Esophagus muscularis mucosa (tissue), 4 donors: ENCODE measurements at regions of chr3 and their contacts with region 1.

Region 1: DNA sequence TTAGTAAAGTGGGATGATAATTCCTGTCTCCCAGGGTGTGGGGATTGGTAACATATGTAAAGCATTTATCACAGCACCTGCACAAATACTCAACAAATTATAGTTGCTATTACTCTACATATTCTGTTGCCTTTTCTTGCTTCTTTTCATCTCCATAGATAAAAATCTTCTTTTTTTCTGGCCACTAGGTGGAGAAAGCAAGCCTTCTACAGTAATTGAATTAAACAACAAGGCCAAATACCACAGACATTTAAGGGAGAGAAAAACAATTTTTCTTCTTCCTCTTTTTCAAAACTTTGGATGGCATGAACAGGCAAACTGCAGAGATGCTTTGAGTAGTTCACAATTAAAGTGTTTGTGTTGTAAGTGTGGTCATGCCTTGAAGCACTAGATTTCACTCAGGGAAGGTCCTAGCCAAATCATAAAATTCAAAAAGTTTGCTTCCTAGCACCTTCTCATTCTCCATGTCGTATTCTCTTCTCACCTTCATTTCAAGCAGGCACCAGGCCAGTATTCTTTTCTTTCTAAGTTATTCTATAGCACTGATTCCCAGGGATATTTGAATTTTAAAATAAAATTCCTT is 493.4 kb upstream of the TGFBR2 start:
- DNase-seq: no peak
- H3K4me3 ChIP-seq: no peak overlapping the region
- H3K27ac ChIP-seq: peak overlapping the region in 1 of 4 donors; percentile 15
- H3K4me1 ChIP-seq: peaks cover 10 to 24% (median 20%) of the 10 kb centered on the region in 4 donors
- H3K27me3 ChIP-seq: no peaks in the 10 kb centered on the region
- CTCF ChIP-seq: peak; percentile 68 to 70 (median 69)
- EP300 ChIP-seq: no peak
- POLR2A ChIP-seq: no peak

Region 2: DNA sequence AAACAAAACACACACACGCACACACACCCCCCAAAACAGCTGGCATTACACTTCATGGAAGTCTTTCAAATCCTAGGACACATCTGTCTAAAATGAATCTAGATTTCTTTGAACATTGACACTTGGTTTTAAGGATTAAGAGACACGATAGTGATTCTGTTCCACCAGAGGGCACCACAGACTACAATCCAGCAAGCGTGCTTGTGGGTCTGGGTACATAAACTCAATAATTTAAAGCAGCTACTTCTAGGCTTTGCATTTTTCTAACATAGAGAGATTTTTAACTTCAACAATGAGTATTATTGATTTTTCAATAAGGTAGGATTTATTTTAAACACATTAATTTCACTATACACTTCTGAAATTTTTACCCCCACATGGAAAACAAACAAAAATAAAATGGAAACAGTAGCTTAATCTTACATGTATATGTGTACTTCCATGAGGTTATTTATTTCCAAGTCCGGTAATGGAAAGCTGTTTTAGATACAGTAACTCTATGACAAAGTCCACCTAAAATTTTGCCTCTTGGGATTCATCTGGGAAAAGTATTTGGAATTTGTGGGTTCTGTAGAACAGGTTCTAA is 70.6 kb before region 1 on chr3:
- intact Hi-C with region 1: loop called (anchors 5 kb)
- DNase-seq: no peak
- H3K4me3 ChIP-seq: no peak overlapping the region
- H3K27ac ChIP-seq: no peak overlapping the region
- H3K4me1 ChIP-seq: peaks cover 0 to 5% (median 0%) of the 10 kb centered on the region in 4 donors
- H3K27me3 ChIP-seq: no peaks in the 10 kb centered on the region
- CTCF ChIP-seq: peak; percentile 68 to 77 (median 75)
- EP300 ChIP-seq: no peak
- POLR2A ChIP-seq: no peak

Region 3: DNA sequence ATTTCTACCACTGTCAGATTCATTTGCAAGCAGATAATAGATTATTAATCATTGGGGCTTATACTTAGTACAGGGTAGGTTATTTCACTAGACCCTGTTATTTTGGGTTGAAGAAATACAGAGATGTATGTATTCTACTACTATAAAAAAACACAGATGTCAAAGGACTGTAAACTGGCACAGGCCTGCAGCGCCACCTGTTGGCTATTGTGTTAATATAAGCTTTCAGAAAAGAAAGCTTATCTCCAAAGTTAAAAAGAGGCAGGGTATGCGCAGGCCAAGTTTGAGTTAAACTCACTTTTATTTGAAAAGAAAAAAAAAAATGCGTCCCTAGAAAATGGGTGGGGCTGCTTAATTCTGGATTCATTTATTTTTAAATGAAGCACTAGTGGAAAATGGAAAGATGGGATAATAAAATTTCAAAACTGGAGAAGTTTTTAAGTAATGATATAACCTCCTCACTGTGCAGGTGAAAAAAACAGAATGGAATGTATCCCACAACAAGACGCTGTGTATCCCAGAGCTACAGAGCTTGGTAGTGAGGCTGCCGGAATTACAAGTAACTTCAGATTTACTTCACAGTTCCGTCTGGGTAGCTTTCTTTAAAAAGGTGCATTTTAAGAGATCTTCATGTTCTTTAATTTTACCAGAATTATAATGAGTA is 86.2 kb after region 1 on chr3:
- intact Hi-C with region 1: loop called (anchors 2 kb)
- DNase-seq: no peak
- H3K4me3 ChIP-seq: no peak overlapping the region
- H3K27ac ChIP-seq: peak overlapping the region in 1 of 4 donors; percentile 14
- H3K4me1 ChIP-seq: peaks cover 15 to 26% (median 17%) of the 10 kb centered on the region in 4 donors
- H3K27me3 ChIP-seq: no peaks in the 10 kb centered on the region
- CTCF ChIP-seq: peak; percentile 74 to 83 (median 82)
- EP300 ChIP-seq: no peak
- POLR2A ChIP-seq: no peak

Region 4: DNA sequence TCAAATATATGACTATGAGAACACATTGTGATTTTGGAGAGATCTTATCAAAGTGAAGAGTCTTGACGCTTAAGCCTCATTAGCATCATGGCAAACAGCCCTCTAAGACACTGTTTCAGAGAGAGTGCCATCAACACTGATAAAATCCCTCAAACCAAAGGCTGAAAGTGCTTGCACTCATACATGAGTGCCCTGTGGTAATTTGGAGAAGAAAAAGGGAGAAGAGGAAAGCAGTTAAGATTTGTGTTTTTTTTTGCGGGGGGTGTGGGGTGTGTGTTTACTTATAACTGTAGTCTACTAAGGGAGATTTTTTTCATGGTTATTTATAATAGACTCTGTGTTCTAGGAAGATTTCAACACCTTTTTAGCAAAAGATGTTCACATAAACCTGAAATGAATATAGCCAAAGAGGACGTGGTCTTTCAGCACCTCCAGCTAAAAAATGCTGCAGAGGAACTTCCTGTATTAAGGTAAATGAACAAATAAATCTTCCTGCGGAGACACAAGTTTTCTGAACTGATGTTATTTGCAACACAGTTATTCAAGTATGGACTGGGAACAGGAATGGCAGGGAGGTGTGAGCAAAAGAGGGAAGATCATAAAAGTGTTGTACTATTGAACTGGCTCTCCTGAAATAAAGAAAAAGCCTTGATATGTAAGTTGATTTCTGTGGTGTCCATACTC is 411.5 kb after region 1 on chr3:
- intact Hi-C with region 1: loop called (anchors 10 kb)
- DNase-seq: no peak
- H3K4me3 ChIP-seq: no peak overlapping the region
- H3K27ac ChIP-seq: no peak overlapping the region
- H3K4me1 ChIP-seq: peaks cover 0 to 47% (median 45%) of the 10 kb centered on the region in 4 donors
- H3K27me3 ChIP-seq: no peaks in the 10 kb centered on the region
- CTCF ChIP-seq: no peak
- EP300 ChIP-seq: no peak
- POLR2A ChIP-seq: no peak

Region 5: DNA sequence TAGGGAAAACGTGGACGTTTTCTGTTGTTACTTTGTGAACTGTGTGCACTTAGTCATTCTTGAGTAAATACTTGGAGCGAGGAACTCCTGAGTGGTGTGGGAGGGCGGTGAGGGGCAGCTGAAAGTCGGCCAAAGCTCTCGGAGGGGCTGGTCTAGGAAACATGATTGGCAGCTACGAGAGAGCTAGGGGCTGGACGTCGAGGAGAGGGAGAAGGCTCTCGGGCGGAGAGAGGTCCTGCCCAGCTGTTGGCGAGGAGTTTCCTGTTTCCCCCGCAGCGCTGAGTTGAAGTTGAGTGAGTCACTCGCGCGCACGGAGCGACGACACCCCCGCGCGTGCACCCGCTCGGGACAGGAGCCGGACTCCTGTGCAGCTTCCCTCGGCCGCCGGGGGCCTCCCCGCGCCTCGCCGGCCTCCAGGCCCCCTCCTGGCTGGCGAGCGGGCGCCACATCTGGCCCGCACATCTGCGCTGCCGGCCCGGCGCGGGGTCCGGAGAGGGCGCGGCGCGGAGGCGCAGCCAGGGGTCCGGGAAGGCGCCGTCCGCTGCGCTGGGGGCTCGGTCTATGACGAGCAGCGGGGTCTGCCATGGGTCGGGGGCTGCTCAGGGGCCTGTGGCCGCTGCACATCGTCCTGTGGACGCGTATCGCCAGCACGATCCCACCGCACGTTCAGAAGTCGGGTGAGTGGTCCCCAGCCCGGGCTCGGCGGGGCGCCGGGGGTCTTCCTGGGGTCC is 493.5 kb after region 1 on chr3 and contains the start of gene TGFBR2:
- intact Hi-C with region 1: loop called (anchors 10 kb)
- DNase-seq: peak; percentile 99
- H3K4me3 ChIP-seq: peak within 1 kb of the TSS; percentile 79 to 96 (median 94)
- H3K27ac ChIP-seq: peak within 1 kb of the TSS; percentile 91 to 99 (median 99)
- H3K4me1 ChIP-seq: peaks cover 21 to 54% (median 42%) of the 10 kb centered on the region in 4 donors
- H3K27me3 ChIP-seq: no peaks in the 10 kb centered on the region
- CTCF ChIP-seq: peak; percentile 17 to 40 (median 30)
- EP300 ChIP-seq: no peak
- POLR2A ChIP-seq: peak; percentile 54
- total RNA-seq, gene TGFBR2: 202 to 292 (median 261) TPM

Region 6: GRCh38 chr3:30751610-30752299 is 638.8 kb after region 1 on chr3:
- intact Hi-C with region 1: loop called (anchors 5 kb)
- DNase-seq: no peak
- H3K4me3 ChIP-seq: no peak overlapping the region
- H3K27ac ChIP-seq: no peak overlapping the region
- H3K4me1 ChIP-seq: peaks cover 3 to 56% (median 52%) of the 10 kb centered on the region in 4 donors
- H3K27me3 ChIP-seq: no peaks in the 10 kb centered on the region
- CTCF ChIP-seq: peak; percentile 14 to 36 (median 18)
- EP300 ChIP-seq: no peak
- POLR2A ChIP-seq: no peak